Right ventricle myocardium inferior (tissue), 1 donor: ENCODE measurements at regions of chr5 and their contacts with region 1.

Region 1: GRCh38 chr5:143824851-143825720 is 13.1 kb downstream of the HMHB1 start:
- DNase-seq: peak; percentile 76
- ATAC-seq: peak; percentile 93

Region 2: GRCh38 chr5:142922223-142922952 is 902.7 kb before region 1 on chr5:
- intact Hi-C with region 1: loop called (anchors 5 kb)
- DNase-seq: no peak
- ATAC-seq: peak; percentile 65

Region 3: DNA sequence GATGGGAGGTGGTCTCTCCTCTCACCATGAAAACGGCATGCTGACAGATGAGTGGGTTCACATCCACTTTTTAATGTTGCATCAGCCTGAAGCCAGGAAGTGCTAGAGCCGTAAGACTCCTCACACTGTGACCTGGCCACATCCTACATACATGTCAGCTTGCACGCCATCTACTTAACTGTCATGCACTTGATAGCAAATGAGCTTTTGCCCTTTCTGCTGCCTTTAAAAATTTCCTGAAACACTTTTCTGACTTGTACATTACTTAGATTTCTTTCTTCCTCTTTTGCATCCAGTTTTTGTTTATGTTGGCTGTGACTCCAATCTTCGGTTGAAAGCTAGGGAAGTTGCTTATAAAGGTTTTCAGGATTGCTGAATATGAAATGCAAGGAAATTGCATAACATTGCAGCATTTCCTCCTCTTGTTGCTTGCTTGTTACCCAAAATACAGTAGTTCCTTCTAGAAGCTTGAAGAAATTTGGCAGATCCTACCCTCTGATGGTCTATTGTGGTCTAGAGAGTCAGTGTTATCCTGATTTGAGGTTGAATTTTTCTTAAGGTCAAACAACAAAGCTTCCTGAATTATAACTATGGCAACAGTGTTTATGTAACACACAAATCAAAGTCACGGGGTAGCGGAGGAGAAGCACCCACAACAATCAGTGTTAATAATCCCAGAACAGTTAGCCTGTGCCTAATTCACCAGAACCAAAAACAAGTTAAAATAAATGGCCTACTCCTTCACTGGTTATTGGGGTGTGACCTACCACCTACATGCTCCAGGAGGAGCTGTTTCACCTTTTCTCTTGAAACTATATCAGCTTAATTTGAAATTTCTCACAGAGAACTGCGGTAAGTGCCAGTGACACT is 822.4 kb before region 1 on chr5:
- intact Hi-C with region 1: loop called (anchors 5 kb)
- DNase-seq: no peak
- ATAC-seq: peak; percentile 74

Region 4: DNA sequence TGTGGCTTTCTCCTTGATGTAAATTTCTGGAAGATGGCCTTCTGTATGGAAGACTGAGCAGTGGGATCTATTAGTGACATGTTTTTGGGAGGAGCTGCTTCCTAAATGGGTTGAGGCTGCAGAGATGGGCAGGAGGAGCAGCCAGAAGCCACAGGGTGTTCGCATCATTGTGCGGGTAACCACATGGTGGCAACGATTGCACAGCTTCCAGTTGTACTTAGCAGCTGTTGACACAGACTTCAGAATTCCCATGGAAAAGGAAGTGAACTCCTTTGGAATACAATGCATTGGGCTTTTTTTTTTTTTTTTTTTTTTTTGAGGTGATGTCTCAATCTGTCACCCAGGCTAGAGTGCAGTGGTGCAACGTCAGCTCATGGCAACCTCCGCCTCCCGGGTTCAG is 718.9 kb before region 1 on chr5:
- intact Hi-C with region 1: loop called (anchors 10 kb)
- DNase-seq: no peak
- ATAC-seq: peak; percentile 56

Region 5: GRCh38 chr5:143527808-143528207 is 297.3 kb before region 1 on chr5:
- intact Hi-C with region 1: no loop called
- DNase-seq: no peak
- ATAC-seq: no peak

Region 6: DNA sequence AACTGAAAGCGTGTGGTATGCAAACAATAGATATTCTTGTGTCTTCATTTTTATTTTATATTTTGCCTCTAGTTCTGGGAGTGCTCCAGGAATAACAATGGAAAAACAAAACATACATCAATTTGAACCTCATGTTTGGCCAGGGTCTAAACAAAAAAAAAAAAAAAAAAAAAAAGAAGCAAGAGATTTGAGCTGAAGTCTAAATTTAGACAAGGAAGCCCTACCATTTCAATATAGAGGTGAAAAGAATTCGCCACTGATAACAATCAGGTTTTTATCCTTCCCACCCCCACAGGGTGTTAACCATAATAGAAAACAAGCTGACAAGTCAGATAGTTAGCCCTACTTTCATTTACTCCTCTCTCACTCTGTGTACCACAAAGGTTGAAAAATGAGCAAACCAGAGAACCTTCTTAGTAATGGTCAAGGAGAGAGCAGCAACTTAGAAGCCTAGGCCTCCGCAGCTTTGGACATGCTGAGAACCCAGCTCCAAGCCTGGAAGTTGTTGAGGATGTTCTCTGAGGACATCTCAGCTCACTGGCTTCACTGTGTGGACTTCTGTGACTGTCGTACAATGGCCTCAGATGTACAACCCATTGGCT is 131.3 kb before region 1 on chr5:
- intact Hi-C with region 1: no loop called
- DNase-seq: no peak
- ATAC-seq: no peak

Region 7: DNA sequence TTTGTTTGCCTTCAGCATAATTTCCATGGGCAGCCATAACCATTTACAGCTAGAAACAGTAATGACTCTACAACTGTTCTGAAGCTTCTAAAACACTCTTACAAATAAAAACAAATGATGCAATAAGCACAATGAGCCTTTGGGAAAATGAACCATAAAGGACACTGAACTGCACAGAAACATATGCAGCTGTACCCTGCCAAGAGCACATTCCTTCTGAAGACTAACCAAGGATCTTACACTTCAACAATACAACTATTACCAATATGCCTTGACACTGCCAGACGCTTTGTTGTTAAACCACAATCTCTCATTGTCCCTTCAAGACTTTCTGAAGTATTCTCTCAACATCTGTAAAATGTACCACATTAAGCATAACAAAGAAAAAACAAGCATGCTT is 117.3 kb before region 1 on chr5:
- intact Hi-C with region 1: loop called (anchors 10 kb)
- DNase-seq: no peak
- ATAC-seq: no peak

Region 8: GRCh38 chr5:143968011-143968878 is 143.2 kb after region 1 on chr5:
- intact Hi-C with region 1: loop called (anchors 10 kb)
- DNase-seq: no peak
- ATAC-seq: no peak

Region 9: GRCh38 chr5:144156767-144157171 is 331.7 kb after region 1 on chr5:
- intact Hi-C with region 1: no loop called
- DNase-seq: no peak
- ATAC-seq: no peak